ENCODE measurements at regions of chr3 and their contacts with region 1.

Region 1: DNA sequence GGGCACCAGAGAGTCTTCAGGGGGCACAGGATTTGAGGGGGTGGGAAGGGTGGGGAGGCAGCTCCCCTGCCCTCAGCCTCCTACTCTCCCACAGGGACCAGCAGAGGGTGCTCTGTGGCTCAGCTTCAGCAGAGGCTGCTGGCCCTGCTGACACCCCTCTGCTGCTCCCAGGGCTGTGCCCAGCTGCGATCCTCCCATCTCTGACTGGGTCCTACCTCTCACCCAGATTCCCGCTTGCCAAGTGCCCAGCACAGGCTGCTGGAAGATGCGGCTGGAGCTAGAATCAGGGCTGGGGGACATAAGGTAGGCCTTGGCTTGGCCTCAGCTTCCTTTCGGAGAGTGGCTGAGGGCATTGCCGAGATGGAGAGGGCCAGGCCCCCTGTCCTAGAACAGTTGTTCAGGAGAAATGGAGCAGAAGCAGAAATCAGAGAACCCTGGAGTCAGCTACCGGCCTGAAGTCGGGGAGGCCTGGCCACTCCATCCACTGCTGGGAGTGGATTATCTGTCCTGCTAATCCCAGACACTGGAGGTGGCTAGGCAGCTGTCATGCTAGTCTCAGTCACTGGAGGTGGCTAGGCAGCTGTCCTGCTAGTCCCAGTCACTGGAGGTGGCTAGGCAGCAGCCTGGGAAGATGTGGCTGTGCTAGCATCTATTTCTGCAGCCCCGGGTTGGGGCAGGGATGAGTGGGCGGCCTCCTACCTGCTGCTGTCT is 3.9 kb downstream of the GRM2 start:
- ATAC-seq: no peak
- H3K4me3 ChIP-seq: no peak overlapping the region
- H3K27ac ChIP-seq: no peak overlapping the region
- H3K4me1 ChIP-seq: peaks cover 14 to 16% of the 10 kb centered on the region in 2 donors

Region 2: GRCh38 chr3:51498876-51499738 is 211.7 kb before region 1 on chr3:
- in situ Hi-C with region 1: no loop called
- ATAC-seq: peak; percentile 67 to 80 (median 79)
- H3K4me3 ChIP-seq: peak overlapping the region; percentile 85 to 100 (median 94)
- H3K27ac ChIP-seq: peak overlapping the region; percentile 97
- H3K4me1 ChIP-seq: peaks cover 2 to 5% of the 10 kb centered on the region in 2 donors

Region 3: DNA sequence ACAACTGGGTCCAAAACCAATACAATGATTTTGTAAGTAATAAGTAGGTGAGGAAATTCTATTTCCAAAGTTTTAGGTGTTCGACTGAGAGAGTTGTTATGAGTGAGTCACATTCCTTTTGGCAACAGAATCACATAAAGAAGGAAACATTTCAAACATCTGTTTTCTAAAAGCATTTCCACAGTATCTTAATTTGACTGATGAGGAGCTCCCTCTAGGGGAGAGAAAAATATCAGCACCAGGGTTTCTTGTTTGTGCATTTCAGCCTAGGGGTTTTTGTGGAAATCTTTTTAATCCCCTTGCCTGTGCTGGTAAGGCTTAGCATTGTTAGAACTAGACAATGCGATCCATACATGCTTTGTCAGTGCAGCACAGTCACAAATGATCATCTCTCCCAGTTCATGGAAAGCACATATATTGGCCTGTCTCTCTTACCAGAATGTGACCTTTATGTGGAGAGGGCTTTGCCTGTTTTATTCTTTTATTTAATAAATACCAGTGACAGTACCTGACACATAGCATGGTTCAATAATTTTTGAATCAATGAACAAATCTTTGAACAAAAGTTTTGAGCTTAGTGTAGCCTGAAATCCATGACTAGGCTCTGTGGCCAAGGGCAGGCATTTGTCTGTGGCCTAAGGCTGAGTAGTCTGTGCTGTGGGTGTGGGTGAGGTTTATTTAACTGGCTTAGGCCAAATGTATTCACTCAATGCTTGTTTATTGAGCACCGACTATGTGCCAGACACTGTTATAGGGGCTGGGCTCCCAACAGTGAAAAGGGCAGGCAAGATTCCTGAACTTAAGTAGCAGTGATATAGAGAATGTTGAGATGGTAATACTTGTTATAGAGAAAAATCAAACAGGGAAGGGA is 89.3 kb after region 1 on chr3:
- in situ Hi-C with region 1: loop called in 1 of 9 experiments (anchors 5 kb)
- ATAC-seq: peak; percentile 33 to 94 (median 44)
- H3K4me3 ChIP-seq: no peak overlapping the region
- H3K27ac ChIP-seq: no peak overlapping the region
- H3K4me1 ChIP-seq: peaks cover 12% of the 10 kb centered on the region in 2 donors

Region 4: GRCh38 chr3:51982782-51983577 is 272.2 kb after region 1 on chr3 and contains the start of gene ACY1:
- in situ Hi-C with region 1: no loop called
- ATAC-seq: peak; percentile 73 to 79 (median 77)
- H3K4me3 ChIP-seq: peak within 1 kb of the TSS; percentile 22 to 42 (median 38)
- H3K27ac ChIP-seq: peak within 1 kb of the TSS; percentile 65 to 84
- H3K4me1 ChIP-seq: peaks cover 9 to 16% of the 10 kb centered on the region in 2 donors
- total RNA-seq, gene ACY1: 6.0 to 136 (median 22.4) TPM